K562 (cell line): ENCODE measurements at regions of chr3 and their contacts with region 1.

Region 1: GRCh38 chr3:58414538-58415197 is 19.0 kb downstream of the PDHB start:
- DNase-seq: peak; percentile 30 to 47 (median 36)
- ATAC-seq: peak; percentile 67
- H3K4me3 ChIP-seq: no peak overlapping the region
- H3K27ac ChIP-seq: no peak overlapping the region
- H3K4me1 ChIP-seq: peaks cover 0 to 6% of the 10 kb centered on the region in 2 experiments; a peak in 2 of 5 replicates
- H3K27me3 ChIP-seq: no peaks in the 10 kb centered on the region
- CTCF ChIP-seq: peak; percentile 56 to 71 (median 58); a peak in 5 of 6 replicates
- EP300 ChIP-seq: no peak
- POLR2A ChIP-seq: no peak
- RAD21 ChIP-seq: peak; percentile 63 to 73

Region 2: GRCh38 chr3:57706462-57706861 is 708.2 kb before region 1 on chr3:
- CTCF ChIA-PET with region 1: no interaction called
- POLR2A ChIA-PET with region 1: no interaction called
- in situ Hi-C with region 1: no loop called
- intact Hi-C with region 1: no loop called
- DNase-seq: no peak
- ATAC-seq: no peak
- H3K4me3 ChIP-seq: no peak overlapping the region
- H3K27ac ChIP-seq: no peak overlapping the region
- H3K4me1 ChIP-seq: no peaks in the 10 kb centered on the region; a peak in 1 of 5 replicates
- H3K27me3 ChIP-seq: no peaks in the 10 kb centered on the region
- CTCF ChIP-seq: no peak
- EP300 ChIP-seq: no peak
- POLR2A ChIP-seq: no peak
- RAD21 ChIP-seq: no peak

Region 3: DNA sequence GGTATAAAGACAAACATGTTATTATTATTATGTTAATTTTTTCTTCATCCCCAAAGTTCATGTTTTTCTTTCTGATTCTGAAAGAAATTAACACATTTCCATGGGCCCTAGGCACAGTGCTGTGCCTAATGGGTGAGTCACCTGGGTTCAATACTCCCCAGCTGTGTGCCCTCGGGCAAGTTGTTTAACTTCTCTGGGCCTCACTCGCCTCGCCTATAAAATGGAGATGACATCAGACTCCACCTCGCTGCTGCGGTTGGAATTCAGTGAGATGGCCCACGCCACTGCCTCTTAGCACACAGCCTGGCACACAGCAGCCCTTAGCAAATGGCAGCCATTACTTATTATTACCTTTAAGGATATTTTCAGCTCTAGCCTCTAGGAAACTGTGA is 226.5 kb before region 1 on chr3:
- CTCF ChIA-PET with region 1: interaction called, 7 read pairs
- POLR2A ChIA-PET with region 1: no interaction called
- in situ Hi-C with region 1: loop called (anchors 10 kb)
- intact Hi-C with region 1: no loop called
- DNase-seq: no peak
- ATAC-seq: no peak
- H3K4me3 ChIP-seq: no peak overlapping the region
- H3K27ac ChIP-seq: no peak overlapping the region
- H3K4me1 ChIP-seq: peaks cover 4 to 16% of the 10 kb centered on the region in 2 experiments
- H3K27me3 ChIP-seq: no peaks in the 10 kb centered on the region
- CTCF ChIP-seq: no peak
- EP300 ChIP-seq: no peak
- POLR2A ChIP-seq: no peak
- RAD21 ChIP-seq: no peak

Region 4: GRCh38 chr3:58305882-58306711 is 108.6 kb before region 1 on chr3 and contains the starts of genes HTD2 and RPP14:
- CTCF ChIA-PET with region 1: interaction called, 5 read pairs
- POLR2A ChIA-PET with region 1: interaction called, 4 read pairs
- in situ Hi-C with region 1: no loop called
- intact Hi-C with region 1: loop called (anchors 5 kb)
- DNase-seq: peak; percentile 88 to 96 (median 90)
- ATAC-seq: peak; percentile 95
- H3K4me3 ChIP-seq: peak within 1 kb of the TSS; percentile 80
- H3K27ac ChIP-seq: peak within 1 kb of the TSS; percentile 96
- H3K4me1 ChIP-seq: peaks cover 0 to 7% of the 10 kb centered on the region in 2 experiments; a peak in 3 of 5 replicates
- H3K27me3 ChIP-seq: no peaks in the 10 kb centered on the region
- CTCF ChIP-seq: peak; percentile 87 to 92 (median 91)
- EP300 ChIP-seq: peak; percentile 28; the same call in 1 of the 2 replicates
- POLR2A ChIP-seq: peak; percentile 86
- RAD21 ChIP-seq: peak; percentile 27 to 55; a peak in 3 of 4 replicates
- polyA plus RNA-seq, gene HTD2: 13.9 to 22.8 TPM
- polyA plus RNA-seq, gene RPP14: 20.5 to 20.8 TPM

Region 5: DNA sequence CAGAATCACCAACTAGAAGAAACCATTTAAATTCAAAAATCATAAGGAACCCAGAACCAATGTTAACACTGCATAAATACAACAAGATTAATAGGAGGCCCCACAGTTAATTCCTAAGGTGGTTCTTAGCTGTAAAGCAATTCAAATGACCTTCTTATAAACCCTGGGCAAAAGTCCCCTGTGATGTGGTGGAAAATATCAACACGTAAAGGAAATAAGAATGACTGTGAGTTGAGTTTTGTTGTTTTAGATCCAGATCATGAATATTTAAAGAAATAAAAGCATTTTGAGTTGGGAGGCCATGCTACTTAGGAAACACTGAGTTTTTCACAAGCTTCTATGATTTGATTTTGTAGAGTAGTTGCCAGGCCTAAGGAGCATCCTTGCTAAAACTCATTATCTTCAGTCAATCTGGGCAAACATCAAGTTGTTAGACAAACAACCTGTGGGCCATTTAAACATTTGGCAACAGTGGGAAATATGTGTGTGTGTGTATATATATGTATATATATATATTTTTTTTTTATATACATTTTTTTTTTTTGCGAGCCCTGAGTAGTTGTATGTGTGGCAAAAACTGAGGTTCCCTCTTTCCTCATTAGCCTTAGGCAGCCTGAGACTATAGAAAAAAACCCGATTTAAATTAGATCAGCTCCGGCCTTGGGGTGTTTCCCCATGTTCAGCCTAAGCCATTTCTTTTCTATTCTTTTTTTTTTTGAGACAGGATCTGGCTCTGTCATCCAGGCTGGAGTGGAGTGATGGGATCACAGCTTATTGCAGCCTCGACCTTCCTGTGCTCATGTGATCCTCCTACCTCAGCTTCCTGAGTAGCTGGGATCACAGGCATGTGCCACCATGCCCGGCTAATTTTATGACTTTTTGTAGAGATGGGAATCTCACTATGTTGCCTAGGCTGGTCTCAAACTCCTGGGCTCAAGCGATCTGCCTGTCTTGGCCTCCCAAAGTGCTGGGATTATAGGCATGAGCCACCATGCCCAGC is 90.0 kb before region 1 on chr3:
- CTCF ChIA-PET with region 1: interaction called, 16 read pairs
- POLR2A ChIA-PET with region 1: no interaction called
- in situ Hi-C with region 1: loop called (anchors 5 kb)
- intact Hi-C with region 1: loop called (anchors 1 kb)
- DNase-seq: no peak
- ATAC-seq: no peak
- H3K4me3 ChIP-seq: no peak overlapping the region
- H3K27ac ChIP-seq: no peak overlapping the region
- H3K4me1 ChIP-seq: peaks cover 9 to 18% of the 10 kb centered on the region in 2 experiments; a peak in 4 of 5 replicates
- H3K27me3 ChIP-seq: no peaks in the 10 kb centered on the region
- CTCF ChIP-seq: no peak
- EP300 ChIP-seq: no peak
- POLR2A ChIP-seq: no peak
- RAD21 ChIP-seq: no peak